ENCODE measurements at regions of chr1 and their contacts with region 1.

Region 1: DNA sequence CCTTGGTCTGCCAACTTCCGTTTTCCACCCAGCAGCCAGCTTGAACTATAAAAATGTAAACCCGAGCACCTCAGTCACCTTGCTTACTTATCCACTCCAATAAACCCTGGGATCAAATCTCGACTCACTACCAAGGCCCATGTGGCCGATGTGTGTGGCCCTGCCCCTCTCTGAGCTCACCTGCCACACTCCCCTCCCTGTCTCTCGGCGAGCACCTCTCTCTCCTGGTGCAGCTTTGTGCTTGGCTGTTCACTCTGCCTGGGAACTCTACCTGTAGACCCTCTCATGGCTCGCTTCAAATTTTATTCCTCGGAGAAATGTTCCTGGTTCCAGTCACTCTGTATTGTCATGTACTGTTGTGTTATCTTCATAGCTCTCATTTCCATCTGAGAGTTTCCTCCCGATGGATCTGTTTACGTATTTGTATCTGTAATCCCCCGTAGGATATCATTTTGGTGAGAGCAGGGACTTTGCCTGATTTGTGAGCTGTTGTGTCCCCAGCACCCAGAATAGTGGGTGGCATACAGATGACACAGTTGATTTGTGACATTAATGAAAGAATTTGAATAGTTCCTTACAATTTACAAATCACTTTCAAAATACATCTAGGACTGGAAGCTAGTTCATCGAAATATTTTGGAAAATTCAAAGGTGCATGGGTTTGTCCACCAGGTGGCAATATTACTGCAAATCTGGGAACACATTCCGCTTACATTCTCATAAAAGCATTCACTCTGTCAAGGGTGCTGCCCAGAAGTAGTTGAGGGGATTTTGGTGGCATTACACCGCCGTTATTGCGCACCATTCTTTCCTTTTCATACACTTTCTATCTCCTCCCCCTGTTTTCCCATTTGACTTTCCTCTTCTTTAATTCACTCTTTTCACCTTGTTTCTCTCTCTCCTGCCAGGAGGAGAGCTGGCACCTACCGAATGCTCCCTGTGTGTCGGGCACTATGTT is 95.3 kb downstream of the ABCA4 start:
- DNase-seq: no peak
- H3K4me3 ChIP-seq: no peak overlapping the region
- H3K27ac ChIP-seq: no peak overlapping the region
- H3K27me3 ChIP-seq: peaks cover under 1% of the 10 kb centered on the region
- CTCF ChIP-seq: peak; percentile 76

Region 2: DNA sequence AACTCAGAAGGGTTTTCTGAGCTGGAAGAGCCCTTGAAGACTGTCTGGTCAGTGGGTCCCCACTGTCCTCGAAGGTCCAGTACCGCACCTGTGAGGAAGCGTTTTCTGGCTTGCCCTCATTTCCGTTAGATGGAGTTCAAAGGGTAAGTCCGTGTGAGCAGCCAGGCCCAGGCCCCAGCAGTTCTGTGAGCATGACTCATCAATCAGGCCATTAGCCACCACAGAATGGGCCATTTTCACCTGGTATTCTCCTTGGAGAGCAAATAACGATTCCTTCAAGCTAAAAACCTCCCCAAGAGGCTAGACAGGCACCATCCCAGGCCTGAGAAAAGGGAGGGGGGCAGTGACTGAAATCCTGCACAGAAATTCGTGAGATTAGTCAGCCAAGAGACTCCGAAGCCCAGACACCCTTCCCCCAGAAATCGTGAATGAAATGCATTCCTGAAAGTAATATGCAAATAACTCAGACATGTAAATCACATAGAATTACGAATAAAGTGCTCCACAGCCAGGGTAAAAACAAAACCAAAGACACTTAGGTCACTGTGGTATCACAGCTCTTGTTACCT is 410.0 kb before region 1 on chr1:
- CTCF ChIA-PET with region 1: no interaction called
- POLR2A ChIA-PET with region 1: no interaction called
- DNase-seq: no peak
- H3K4me3 ChIP-seq: no peak overlapping the region
- H3K27ac ChIP-seq: peak overlapping the region; percentile 77
- H3K27me3 ChIP-seq: no peaks in the 10 kb centered on the region
- CTCF ChIP-seq: no peak

Region 3: GRCh38 chr1:93641527-93641926 is 384.1 kb before region 1 on chr1:
- CTCF ChIA-PET with region 1: no interaction called
- POLR2A ChIA-PET with region 1: no interaction called
- DNase-seq: no peak
- H3K4me3 ChIP-seq: no peak overlapping the region
- H3K27ac ChIP-seq: no peak overlapping the region
- H3K27me3 ChIP-seq: no peaks in the 10 kb centered on the region
- CTCF ChIP-seq: no peak

Region 4: DNA sequence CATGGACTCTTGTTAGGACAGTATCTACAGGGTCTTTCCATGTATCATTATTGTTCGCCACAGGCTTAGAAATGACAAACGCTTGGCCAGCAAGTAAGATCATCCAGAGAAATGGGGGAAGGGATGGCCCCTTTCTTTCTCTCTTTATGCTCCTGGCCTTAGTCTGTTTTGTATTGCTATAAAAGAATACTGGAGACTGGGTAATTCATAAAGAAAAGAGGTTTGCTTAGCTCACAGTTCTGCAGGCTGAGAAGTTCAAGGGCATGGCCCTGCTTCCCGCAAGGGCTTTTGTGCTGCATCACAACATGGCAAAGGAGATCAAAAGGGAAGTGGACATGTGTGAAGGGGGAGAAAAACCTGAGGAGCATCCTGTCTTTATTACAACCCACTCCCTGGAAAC is 187.7 kb before region 1 on chr1:
- CTCF ChIA-PET with region 1: no interaction called
- POLR2A ChIA-PET with region 1: no interaction called
- DNase-seq: no peak
- H3K4me3 ChIP-seq: no peak overlapping the region
- H3K27ac ChIP-seq: no peak overlapping the region
- H3K27me3 ChIP-seq: no peaks in the 10 kb centered on the region
- CTCF ChIP-seq: no peak

Region 5: GRCh38 chr1:93980320-93981273 is 45.1 kb before region 1 on chr1:
- CTCF ChIA-PET with region 1: interaction called, 4 read pairs
- POLR2A ChIA-PET with region 1: interaction called, 13 read pairs
- DNase-seq: no peak
- H3K4me3 ChIP-seq: no peak overlapping the region
- H3K27ac ChIP-seq: peak overlapping the region; percentile 49
- H3K27me3 ChIP-seq: no peaks in the 10 kb centered on the region
- CTCF ChIP-seq: peak; percentile 47

Region 6: GRCh38 chr1:94012686-94013624 is 12.7 kb before region 1 on chr1:
- CTCF ChIA-PET with region 1: interaction called, 19 read pairs
- POLR2A ChIA-PET with region 1: no interaction called
- DNase-seq: no peak
- H3K4me3 ChIP-seq: no peak overlapping the region
- H3K27ac ChIP-seq: no peak overlapping the region
- H3K27me3 ChIP-seq: peaks cover 6% of the 10 kb centered on the region
- CTCF ChIP-seq: no peak

Region 7: GRCh38 chr1:94045465-94046056 is 19.9 kb after region 1 on chr1:
- CTCF ChIA-PET with region 1: interaction called, 211 read pairs
- POLR2A ChIA-PET with region 1: interaction called, 3 read pairs
- DNase-seq: peak; percentile 83
- H3K4me3 ChIP-seq: peak overlapping the region; percentile 11; the same call in 1 of the 2 replicates
- H3K27ac ChIP-seq: peak overlapping the region; percentile 84
- H3K27me3 ChIP-seq: no peaks in the 10 kb centered on the region
- CTCF ChIP-seq: peak; percentile 69

Region 8: GRCh38 chr1:94237291-94238226 is 211.9 kb after region 1 on chr1 and contains the start of gene ARHGAP29:
- CTCF ChIA-PET with region 1: interaction called, 11 read pairs
- POLR2A ChIA-PET with region 1: interaction called, 4 read pairs
- DNase-seq: no peak
- H3K4me3 ChIP-seq: peak within 1 kb of the TSS; percentile 77
- H3K27ac ChIP-seq: no peak within 1 kb of the TSS
- H3K27me3 ChIP-seq: no peaks in the 10 kb centered on the region
- CTCF ChIP-seq: no peak
- polyA plus RNA-seq, gene ARHGAP29: 21.3 and 30.4 TPM in 2 replicates

Region 9: GRCh38 chr1:94270801-94271203 is 245.1 kb after region 1 on chr1:
- CTCF ChIA-PET with region 1: no interaction called
- POLR2A ChIA-PET with region 1: no interaction called
- DNase-seq: peak; percentile 44
- H3K4me3 ChIP-seq: no peak overlapping the region
- H3K27ac ChIP-seq: peak overlapping the region; percentile 25
- H3K27me3 ChIP-seq: no peaks in the 10 kb centered on the region
- CTCF ChIP-seq: no peak

Region 10: DNA sequence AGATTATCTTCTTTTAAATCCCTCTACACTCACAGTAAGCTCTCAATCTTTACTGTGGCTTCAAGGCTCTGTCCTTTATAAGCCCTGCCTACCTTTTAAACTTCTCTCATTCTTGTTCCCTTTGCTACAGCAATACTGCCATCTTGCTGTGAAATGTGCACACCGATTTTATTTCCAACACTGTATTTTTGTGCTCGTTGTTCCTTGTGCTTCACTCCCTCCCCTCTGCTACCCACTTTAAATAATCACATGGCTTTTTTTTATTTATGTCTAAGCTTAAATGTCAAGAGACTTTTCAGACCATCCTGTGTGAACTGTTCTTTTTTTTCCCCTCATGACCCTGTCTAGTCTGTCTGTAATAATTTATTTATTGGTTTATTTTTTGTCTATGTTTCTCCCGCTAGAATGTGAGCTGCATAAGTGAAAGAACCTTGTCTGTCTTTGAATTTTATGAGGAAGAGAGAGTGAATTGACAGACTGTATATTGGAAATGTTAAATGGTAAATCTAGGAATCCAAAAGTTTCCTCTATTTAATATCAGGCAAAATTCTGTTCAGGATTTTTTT is 438.2 kb after region 1 on chr1:
- CTCF ChIA-PET with region 1: interaction called, 41 read pairs
- POLR2A ChIA-PET with region 1: no interaction called
- DNase-seq: peak; percentile 21
- H3K4me3 ChIP-seq: no peak overlapping the region
- H3K27ac ChIP-seq: no peak overlapping the region
- H3K27me3 ChIP-seq: no peaks in the 10 kb centered on the region
- CTCF ChIP-seq: peak; percentile 71

Measured in AG04450 (cell line).